Activated CD4-positive, alpha-beta T cell treated with anti-CD3 and anti-CD28 coated beads, Interleukin-2, amount 10 ng/mL, durations not matched to agents 7 days and 5 days (primary cell): ENCODE measurements at regions of chr6 and their contacts with region 1.

Region 1: GRCh38 chr6:150891888-150892485 is 26.5 kb downstream of the MTHFD1L start:
- DNase-seq: peak; percentile 75
- H3K4me3 Mint-ChIP-seq: no peak overlapping the region
- H3K27ac Mint-ChIP-seq: no peak overlapping the region
- H3K4me1 Mint-ChIP-seq: peaks cover 30% of the 10 kb centered on the region
- H3K27me3 Mint-ChIP-seq: no peaks in the 10 kb centered on the region

Region 2: DNA sequence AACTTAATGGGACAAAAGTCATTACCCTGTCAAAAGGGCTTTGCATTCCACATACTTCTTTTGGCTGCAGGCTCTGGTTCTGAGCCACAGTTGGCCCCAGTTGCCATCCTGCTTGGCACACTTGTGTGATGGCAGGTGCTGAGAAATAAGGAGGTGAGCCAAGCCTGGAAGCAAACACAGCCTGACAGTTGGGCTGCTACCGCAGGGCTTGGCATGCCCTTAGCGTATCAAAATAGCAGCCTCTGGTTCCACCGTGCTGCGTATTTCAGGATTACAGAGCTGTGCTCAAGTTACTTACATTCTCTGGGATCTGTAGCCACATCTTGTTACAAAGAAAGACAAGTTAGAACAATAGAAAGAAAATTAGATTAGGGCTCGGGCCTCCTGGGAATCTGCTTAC is 15.4 kb before region 1 on chr6:
- CTCF ChIA-PET with region 1: interaction called, 30 read pairs
- POLR2A ChIA-PET with region 1: no interaction called
- DNase-seq: no peak
- H3K4me3 Mint-ChIP-seq: no peak overlapping the region
- H3K27ac Mint-ChIP-seq: no peak overlapping the region
- H3K4me1 Mint-ChIP-seq: peaks cover 4% of the 10 kb centered on the region
- H3K27me3 Mint-ChIP-seq: no peaks in the 10 kb centered on the region

Region 3: GRCh38 chr6:150905769-150906506 is 14.0 kb after region 1 on chr6:
- CTCF ChIA-PET with region 1: interaction called, 14 read pairs
- POLR2A ChIA-PET with region 1: no interaction called
- DNase-seq: no peak
- H3K4me3 Mint-ChIP-seq: no peak overlapping the region
- H3K27ac Mint-ChIP-seq: no peak overlapping the region
- H3K4me1 Mint-ChIP-seq: no peaks in the 10 kb centered on the region
- H3K27me3 Mint-ChIP-seq: no peaks in the 10 kb centered on the region

Region 4: GRCh38 chr6:151323791-151324487 is 432.0 kb after region 1 on chr6:
- CTCF ChIA-PET with region 1: interaction called, 64 read pairs
- POLR2A ChIA-PET with region 1: no interaction called
- DNase-seq: peak; percentile 75
- H3K4me3 Mint-ChIP-seq: no peak overlapping the region
- H3K27ac Mint-ChIP-seq: no peak overlapping the region
- H3K4me1 Mint-ChIP-seq: peaks cover 23% of the 10 kb centered on the region
- H3K27me3 Mint-ChIP-seq: peaks cover 47% of the 10 kb centered on the region